GM13977 (cell line): ENCODE measurements at regions of chr11 and their contacts with region 1.

Region 1: DNA sequence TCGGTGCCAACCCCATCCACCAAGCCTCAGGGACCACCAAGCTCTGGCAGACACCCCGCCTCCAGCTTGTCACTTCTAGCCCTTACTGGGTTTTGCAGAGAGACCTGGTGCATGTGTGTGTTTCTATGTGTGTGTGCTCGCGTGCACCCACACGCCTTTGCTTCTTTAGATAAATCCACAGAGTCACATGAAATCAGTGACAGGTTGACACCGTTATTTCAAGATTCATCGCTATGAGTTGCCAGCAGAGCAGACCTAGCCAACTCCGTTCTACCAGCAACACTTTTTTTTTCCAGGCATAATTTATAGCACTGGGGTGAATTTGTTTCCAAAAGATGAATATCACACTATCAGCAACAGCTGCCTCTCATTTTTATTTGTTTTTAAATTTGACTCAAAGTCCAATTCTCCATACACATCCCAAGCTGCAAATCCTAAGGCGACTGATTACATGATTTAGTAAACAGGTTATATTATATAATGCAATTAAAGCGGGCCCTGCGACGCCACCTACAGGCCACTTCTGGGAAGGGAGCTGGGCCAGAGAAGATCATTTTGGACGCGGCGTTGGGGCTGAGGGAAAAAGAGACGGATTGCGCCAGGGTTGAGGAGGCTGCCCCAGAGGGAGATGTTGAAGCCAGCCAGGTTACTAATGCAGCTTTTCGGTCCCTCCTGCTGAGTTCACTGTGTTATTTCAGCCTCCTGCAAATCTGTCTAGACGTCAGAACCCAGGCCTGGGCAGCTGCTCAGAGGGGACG is 150.5 kb downstream of the FEZ1 start:
- DNase-seq: peak; percentile 76
- CTCF ChIP-seq: peak; percentile 83

Region 2: GRCh38 chr11:124953753-124954589 is 391.6 kb before region 1 on chr11 and contains the start of gene CCDC15:
- in situ Hi-C with region 1: loop called (anchors 25 kb)
- DNase-seq: peak; percentile 88
- CTCF ChIP-seq: no peak

Region 3: GRCh38 chr11:125164422-125165110 is 181.0 kb before region 1 on chr11 and contains the start of gene PKNOX2:
- in situ Hi-C with region 1: loop called (anchors 10 kb)
- DNase-seq: peak; percentile 82
- CTCF ChIP-seq: peak; percentile 66